CD8-positive, alpha-beta T cell (primary cell): ENCODE measurements at regions of chr4 and their contacts with region 1.

Region 1: DNA sequence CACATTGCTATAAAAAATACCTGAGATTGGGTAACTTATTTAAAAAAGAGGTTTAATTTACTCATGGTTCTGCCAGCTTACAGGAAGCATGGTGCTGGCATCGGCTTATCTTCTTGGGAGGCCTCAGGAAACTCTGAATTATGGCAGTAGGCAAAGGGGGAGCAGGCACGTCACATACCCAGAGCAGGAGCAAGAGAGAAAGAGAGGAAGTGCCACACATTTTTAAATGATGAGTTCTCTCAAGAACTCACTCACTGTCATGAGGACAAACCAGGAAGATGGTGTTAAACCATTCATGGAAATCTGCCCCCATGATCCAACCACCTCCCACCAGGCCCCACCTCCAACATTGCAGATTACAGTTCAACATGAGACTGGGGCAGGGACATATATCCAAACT is 10.0 kb upstream of the AFF1 start:
- DNase-seq: no peak
- ATAC-seq: no peak
- H3K4me3 ChIP-seq: no peak overlapping the region
- H3K4me3 Mint-ChIP-seq: no peak overlapping the region
- H3K27ac ChIP-seq: no peak overlapping the region
- H3K27ac Mint-ChIP-seq: no peak overlapping the region
- H3K4me1 ChIP-seq: no peaks in the 10 kb centered on the region
- H3K4me1 Mint-ChIP-seq: peaks cover 2% of the 10 kb centered on the region
- H3K27me3 ChIP-seq: no peaks in the 10 kb centered on the region
- H3K27me3 Mint-ChIP-seq: no peaks in the 10 kb centered on the region
- CTCF ChIP-seq: no peak

Region 2: GRCh38 chr4:84924420-84924819 is 2000.4 kb before region 1 on chr4:
- CTCF ChIA-PET with region 1: no interaction called
- POLR2A ChIA-PET with region 1: no interaction called
- intact Hi-C with region 1: no loop called
- DNase-seq: no peak
- ATAC-seq: no peak
- H3K4me3 ChIP-seq: no peak overlapping the region
- H3K4me3 Mint-ChIP-seq: no peak overlapping the region
- H3K27ac ChIP-seq: no peak overlapping the region
- H3K27ac Mint-ChIP-seq: no peak overlapping the region
- H3K4me1 ChIP-seq: no peaks in the 10 kb centered on the region
- H3K4me1 Mint-ChIP-seq: no peaks in the 10 kb centered on the region
- H3K27me3 ChIP-seq: no peaks in the 10 kb centered on the region
- H3K27me3 Mint-ChIP-seq: no peaks in the 10 kb centered on the region
- CTCF ChIP-seq: no peak

Region 3: DNA sequence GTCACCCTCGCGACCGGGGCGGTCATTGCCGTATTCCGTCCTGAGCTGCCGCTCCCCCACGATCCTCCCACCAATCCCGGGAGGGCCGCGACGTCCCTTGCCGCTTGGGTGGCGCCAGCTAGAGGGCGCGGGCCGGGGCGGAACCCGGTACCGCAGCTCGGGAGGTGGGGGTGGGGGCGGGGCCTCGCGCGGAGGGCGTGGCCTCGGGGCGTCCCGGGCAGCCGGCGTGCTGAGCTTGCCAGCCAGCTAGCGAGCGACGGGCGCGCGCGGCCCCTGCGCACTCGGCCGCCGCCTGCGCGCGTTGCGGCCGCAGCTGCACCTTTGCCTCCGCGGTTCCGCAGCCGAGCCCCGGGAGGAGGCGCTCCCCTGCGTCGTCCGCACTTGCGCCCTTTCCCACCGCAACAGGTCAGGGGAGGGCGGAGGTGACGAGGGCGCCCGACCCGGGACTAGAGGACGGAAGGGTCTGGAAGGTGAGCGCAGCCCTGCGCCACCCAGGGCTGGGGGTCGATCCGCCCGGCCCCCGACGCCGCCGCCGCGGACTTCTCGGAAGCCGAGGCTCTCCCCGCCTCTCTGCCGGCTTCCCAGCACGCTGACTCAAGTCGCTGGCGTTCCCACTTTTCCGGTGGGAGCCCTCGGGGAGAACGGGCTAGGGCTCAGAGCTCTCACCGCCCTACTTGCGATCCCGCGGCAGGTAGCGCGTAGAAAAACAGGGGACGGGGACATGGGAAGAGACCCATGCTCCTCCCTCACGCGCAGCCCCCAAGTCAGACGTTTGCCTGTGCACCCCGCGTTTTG is 10.2 kb after region 1 on chr4 and contains the start of gene AFF1:
- CTCF ChIA-PET with region 1: interaction called, 25 read pairs
- POLR2A ChIA-PET with region 1: interaction called, 6 read pairs
- intact Hi-C with region 1: no loop called
- DNase-seq: peak; percentile 74 to 97 (median 85)
- ATAC-seq: peak; percentile 71
- H3K4me3 ChIP-seq: peak within 1 kb of the TSS; percentile 76 to 87
- H3K4me3 Mint-ChIP-seq: peak within 1 kb of the TSS; percentile 88
- H3K27ac ChIP-seq: peak within 1 kb of the TSS; percentile 81 to 85
- H3K27ac Mint-ChIP-seq: peak within 1 kb of the TSS; percentile 95
- H3K4me1 ChIP-seq: peaks cover 42% of the 10 kb centered on the region
- H3K4me1 Mint-ChIP-seq: peaks cover 50% of the 10 kb centered on the region
- H3K27me3 ChIP-seq: no peaks in the 10 kb centered on the region
- H3K27me3 Mint-ChIP-seq: no peaks in the 10 kb centered on the region
- CTCF ChIP-seq: peak; percentile 44
- total RNA-seq, gene AFF1: 32.3 to 33.8 TPM

Region 4: GRCh38 chr4:87073199-87074120 is 148.6 kb after region 1 on chr4:
- CTCF ChIA-PET with region 1: interaction called, 20 read pairs
- POLR2A ChIA-PET with region 1: interaction called, 4 read pairs
- intact Hi-C with region 1: no loop called
- DNase-seq: peak; percentile 2 to 72 (median 47)
- ATAC-seq: peak; percentile 96
- H3K4me3 ChIP-seq: peak overlapping the region; percentile 13 to 26
- H3K4me3 Mint-ChIP-seq: peak overlapping the region; percentile 69
- H3K27ac ChIP-seq: peak overlapping the region in 1 of 2 experiments; percentile 21
- H3K27ac Mint-ChIP-seq: peak overlapping the region; percentile 56
- H3K4me1 ChIP-seq: peaks cover 18% of the 10 kb centered on the region
- H3K4me1 Mint-ChIP-seq: peaks cover 36% of the 10 kb centered on the region
- H3K27me3 ChIP-seq: no peaks in the 10 kb centered on the region
- H3K27me3 Mint-ChIP-seq: no peaks in the 10 kb centered on the region
- CTCF ChIP-seq: no peak

Region 5: GRCh38 chr4:87093443-87094123 is 168.8 kb after region 1 on chr4:
- CTCF ChIA-PET with region 1: interaction called, 229 read pairs
- POLR2A ChIA-PET with region 1: interaction called, 13 read pairs
- intact Hi-C with region 1: loop called (anchors 1 kb)
- DNase-seq: peak in 8 of 9 experiments; percentile 13 to 69 (median 42)
- ATAC-seq: peak; percentile 92
- H3K4me3 ChIP-seq: no peak overlapping the region
- H3K4me3 Mint-ChIP-seq: no peak overlapping the region
- H3K27ac ChIP-seq: no peak overlapping the region
- H3K27ac Mint-ChIP-seq: peak overlapping the region; percentile 62
- H3K4me1 ChIP-seq: no peaks in the 10 kb centered on the region
- H3K4me1 Mint-ChIP-seq: peaks cover 17% of the 10 kb centered on the region
- H3K27me3 ChIP-seq: no peaks in the 10 kb centered on the region
- H3K27me3 Mint-ChIP-seq: no peaks in the 10 kb centered on the region
- CTCF ChIP-seq: peak; percentile 72

Region 6: GRCh38 chr4:87118826-87119225 is 194.0 kb after region 1 on chr4:
- CTCF ChIA-PET with region 1: interaction called, 15 read pairs
- POLR2A ChIA-PET with region 1: no interaction called
- intact Hi-C with region 1: no loop called
- DNase-seq: peak in 2 of 9 experiments; percentile 6 to 29
- ATAC-seq: peak; percentile 38
- H3K4me3 ChIP-seq: no peak overlapping the region
- H3K4me3 Mint-ChIP-seq: no peak overlapping the region
- H3K27ac ChIP-seq: no peak overlapping the region
- H3K27ac Mint-ChIP-seq: no peak overlapping the region
- H3K4me1 ChIP-seq: no peaks in the 10 kb centered on the region
- H3K4me1 Mint-ChIP-seq: peaks cover 17% of the 10 kb centered on the region
- H3K27me3 ChIP-seq: no peaks in the 10 kb centered on the region
- H3K27me3 Mint-ChIP-seq: no peaks in the 10 kb centered on the region
- CTCF ChIP-seq: no peak

Region 7: DNA sequence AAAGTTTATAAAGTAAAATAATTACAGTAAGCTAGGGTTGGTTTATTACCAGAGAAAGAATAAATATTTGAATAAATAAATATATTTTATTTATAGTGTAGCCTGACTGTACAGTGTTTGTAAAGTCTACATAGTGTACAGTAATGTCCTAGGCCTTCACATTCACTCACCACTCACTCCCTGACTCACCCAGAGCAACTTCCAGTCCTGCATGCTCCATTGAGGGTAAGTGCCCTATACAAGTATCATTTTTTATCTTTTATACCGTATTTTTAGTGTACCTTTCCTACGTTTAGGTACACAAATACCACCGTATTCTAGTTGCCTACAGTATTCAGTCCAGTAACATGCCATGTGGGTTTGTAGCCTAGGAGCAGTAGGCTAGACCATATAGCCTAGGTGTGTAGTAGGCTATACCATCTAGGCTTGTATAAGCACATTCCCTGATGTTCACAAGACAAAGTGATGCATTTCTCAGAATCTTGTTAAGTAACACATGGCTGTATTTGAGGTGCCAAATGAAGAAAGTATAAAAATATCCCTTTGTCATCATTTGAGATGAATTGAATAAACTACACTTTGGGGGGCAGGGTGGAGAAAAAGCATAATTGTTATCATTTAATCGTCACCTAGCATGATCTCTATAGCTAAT is 310.3 kb after region 1 on chr4:
- CTCF ChIA-PET with region 1: interaction called, 8 read pairs
- POLR2A ChIA-PET with region 1: no interaction called
- intact Hi-C with region 1: loop called (anchors 1 kb)
- DNase-seq: peak in 1 of 9 experiments; percentile 5
- ATAC-seq: no peak
- H3K4me3 ChIP-seq: peak overlapping the region; percentile 52 to 61
- H3K4me3 Mint-ChIP-seq: peak overlapping the region; percentile 79
- H3K27ac ChIP-seq: no peak overlapping the region
- H3K27ac Mint-ChIP-seq: no peak overlapping the region
- H3K4me1 ChIP-seq: peaks cover 4% of the 10 kb centered on the region
- H3K4me1 Mint-ChIP-seq: peaks cover 2% of the 10 kb centered on the region
- H3K27me3 ChIP-seq: no peaks in the 10 kb centered on the region
- H3K27me3 Mint-ChIP-seq: no peaks in the 10 kb centered on the region
- CTCF ChIP-seq: no peak